ENCODE measurements at regions of chrX and their contacts with region 1.

Region 1: DNA sequence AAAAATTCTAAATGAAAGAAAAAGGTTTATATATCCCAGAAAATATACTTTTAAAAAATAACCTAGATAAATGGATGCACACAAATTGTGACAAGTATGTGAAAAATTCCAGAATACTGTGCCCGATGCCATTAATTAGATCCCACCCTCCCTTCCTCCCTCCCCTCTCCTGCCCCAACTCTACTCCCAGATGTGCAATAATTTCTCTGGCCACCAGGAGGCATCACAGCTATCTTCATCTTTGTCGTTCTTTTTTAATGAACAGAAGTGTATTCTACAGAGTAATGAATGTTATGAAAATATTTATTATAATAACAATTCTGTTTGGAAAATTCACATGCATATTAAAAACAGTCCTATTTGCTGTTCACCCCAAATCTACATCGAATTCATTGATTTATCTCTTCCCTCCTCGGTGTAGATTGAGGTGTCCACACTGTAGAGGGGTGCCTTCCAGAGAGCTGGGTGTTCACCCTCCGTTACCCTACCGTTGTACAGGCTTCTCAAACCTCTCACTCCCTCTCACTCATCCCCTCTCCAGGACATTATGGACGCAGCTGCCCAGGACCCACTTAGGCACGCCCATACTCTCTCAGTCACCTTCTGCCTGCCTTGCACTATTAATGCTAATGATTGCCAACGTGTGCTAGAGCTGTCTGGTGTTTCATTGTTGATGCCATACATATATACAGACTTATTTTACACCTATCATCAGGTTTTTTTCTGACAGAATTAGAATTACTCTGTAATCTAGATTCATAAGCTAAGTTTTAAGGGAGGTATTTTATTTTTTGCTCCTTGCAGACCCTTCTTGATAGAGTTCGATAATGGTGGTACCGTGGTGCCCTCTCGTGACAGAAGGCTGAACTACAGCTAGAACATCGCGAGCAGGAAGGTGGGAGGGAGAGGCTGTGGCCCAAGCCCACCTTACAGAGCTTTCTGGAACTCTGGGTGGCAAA is 14.1 kb downstream of the RAB40AL start:
- DNase-seq: peak in 2 of 3 donors; percentile 25 to 73
- ATAC-seq: peak; percentile 66
- H3K4me3 ChIP-seq: no peak overlapping the region
- H3K4me1 ChIP-seq: no peaks in the 10 kb centered on the region
- CTCF ChIP-seq: peak; percentile 18

Region 2: DNA sequence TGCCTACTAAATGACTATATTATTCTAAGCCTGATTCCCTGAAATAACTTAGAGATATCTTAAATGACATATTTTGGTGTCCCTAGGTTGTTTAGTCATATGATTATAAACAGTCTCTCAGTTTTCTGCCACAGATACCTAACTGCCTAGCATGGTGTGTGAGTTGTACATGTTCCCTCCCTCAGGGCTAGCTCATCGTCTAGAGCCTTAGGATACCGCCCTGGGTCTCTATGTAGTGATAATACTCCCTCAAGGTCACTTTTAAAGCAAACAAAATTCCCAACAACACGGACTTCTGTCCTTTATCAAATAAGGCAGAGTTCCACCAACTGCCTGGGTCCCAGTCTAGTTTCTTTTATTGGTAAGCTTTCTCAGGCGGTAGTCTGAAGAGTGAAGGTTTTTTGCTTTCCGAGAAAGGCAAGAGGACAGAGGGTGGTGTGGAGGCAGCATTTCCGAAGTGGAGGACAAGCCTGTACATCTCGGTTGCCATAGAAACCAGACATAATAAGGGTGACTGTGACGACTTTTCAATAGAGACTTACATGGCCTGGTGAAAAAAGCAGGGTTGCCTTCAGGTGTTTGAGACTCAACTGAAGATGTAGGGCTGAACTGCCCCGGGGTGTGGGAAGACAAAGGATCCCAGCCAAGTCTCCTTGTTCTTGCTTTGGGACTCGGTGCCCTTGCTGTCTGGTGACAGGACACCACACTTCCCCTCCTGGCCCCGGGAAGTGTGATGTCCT is 67.8 kb before region 1 on chrX:
- intact Hi-C with region 1: no loop called
- DNase-seq: no peak
- ATAC-seq: no peak
- H3K4me3 ChIP-seq: no peak overlapping the region
- H3K4me1 ChIP-seq: no peaks in the 10 kb centered on the region
- CTCF ChIP-seq: no peak

Region 3: GRCh38 chrX:103157496-103158320 is 206.5 kb after region 1 on chrX:
- intact Hi-C with region 1: loop called in 1 of 2 experiments (anchors 5 kb)
- DNase-seq: peak in 1 of 3 donors; percentile 40
- ATAC-seq: no peak
- H3K4me3 ChIP-seq: no peak overlapping the region
- H3K4me1 ChIP-seq: no peaks in the 10 kb centered on the region
- CTCF ChIP-seq: no peak

Region 4: GRCh38 chrX:103175944-103176753 is 225.0 kb after region 1 on chrX:
- intact Hi-C with region 1: loop called in 1 of 2 experiments (anchors 10 kb)
- DNase-seq: peak in 2 of 3 donors; percentile 58 to 77
- ATAC-seq: peak; percentile 74
- H3K4me3 ChIP-seq: no peak overlapping the region
- H3K4me1 ChIP-seq: no peaks in the 10 kb centered on the region
- CTCF ChIP-seq: no peak